ENCODE measurements at regions of chr16 and their contacts with region 1.

Region 1: DNA sequence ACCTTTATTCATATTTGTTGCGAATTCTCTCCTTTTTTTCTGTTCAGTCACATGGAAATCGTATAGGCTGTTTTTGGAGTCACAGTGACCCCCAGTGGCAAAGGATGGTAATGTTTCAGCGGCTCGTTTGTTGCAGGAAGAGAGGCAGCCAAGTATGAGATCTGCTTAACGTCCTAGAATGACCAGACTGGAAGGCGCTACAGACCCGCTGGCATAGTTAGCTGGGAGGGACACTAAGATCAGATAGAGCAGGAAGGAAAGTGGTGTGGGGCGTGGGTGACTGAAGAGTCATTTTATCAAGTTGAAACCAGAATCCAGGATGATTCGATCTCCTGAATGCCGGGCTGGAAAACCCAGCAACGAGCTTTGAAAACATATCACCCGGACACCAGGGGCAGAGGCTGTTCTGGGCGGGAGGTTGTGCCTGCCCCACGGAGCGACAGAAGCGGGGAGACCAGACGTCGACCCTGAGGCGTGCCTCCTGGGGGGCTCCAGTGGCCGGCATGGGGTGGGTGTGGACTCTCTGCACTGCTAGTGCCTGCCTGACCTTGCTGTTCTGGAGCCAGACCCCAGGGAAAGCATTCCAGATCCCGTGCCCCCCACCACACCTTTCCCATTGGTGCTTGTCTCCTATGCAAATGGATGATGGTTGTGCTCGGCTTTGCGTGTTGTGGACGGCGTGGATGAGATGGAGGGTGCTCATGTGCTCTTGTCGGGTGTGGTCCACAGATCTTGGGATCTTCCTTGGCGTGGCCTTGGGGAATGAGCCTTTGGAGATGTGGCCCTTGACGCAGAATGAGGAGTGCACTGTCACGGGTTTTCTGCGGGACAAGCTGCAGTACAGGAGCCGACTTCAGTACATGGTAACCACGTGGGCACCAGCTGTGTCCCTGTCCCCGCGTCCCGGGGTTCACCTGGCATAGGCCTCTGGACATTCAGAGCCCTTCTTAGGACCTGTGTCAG is 7.7 kb downstream of the IL34 start:
- DNase-seq: peak; percentile 79
- H3K4me3 ChIP-seq: no peak overlapping the region
- H3K27ac ChIP-seq: no peak overlapping the region
- H3K4me1 ChIP-seq: peaks cover 10% of the 10 kb centered on the region
- H3K27me3 ChIP-seq: no peaks in the 10 kb centered on the region
- CTCF ChIP-seq: peak; percentile 79 to 84

Region 2: DNA sequence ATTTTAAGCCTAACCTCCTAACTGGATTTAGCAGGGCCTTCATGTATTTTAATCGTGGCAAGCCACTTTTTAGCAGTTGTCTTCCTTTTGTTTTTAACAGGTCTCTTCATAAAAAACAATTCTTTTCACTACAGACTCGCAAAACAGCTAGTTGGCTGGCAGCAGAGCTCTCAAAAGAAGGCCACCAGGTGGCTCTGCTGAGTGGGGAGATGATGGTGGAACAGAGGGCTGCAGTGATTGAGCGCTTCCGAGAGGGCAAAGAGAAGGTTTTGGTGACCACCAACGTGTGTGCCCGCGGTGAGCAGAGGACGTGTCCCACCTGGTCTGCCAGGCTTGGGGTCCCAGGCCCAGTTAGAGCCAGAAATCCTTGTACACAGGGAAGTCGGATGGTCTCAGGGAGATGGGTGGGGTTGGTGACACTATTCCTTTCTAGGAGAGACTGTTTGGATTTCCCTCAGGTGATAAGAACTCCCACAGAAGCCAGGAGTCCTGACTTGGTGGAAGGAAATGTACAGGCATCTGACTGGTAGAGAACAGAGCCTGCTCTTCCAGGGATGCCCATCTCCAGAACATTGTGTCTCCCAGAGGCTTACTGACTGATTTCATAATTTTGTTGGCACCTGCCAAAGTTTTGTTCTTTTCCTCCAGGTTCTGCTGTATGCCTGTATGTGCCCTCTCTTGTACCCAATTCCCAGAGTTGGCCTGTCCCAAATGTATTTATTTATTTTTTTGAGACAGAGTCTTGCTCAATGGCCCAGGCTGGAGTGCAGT is 322.3 kb before region 1 on chr16:
- CTCF ChIA-PET with region 1: no interaction called
- dilution Hi-C with region 1: no loop called
- in situ Hi-C with region 1: no loop called
- intact Hi-C with region 1: loop called (anchors 1 kb)
- DNase-seq: no peak
- H3K4me3 ChIP-seq: no peak overlapping the region
- H3K27ac ChIP-seq: no peak overlapping the region
- H3K4me1 ChIP-seq: no peaks in the 10 kb centered on the region
- H3K27me3 ChIP-seq: no peaks in the 10 kb centered on the region
- CTCF ChIP-seq: peak; percentile 36 to 61

Region 3: DNA sequence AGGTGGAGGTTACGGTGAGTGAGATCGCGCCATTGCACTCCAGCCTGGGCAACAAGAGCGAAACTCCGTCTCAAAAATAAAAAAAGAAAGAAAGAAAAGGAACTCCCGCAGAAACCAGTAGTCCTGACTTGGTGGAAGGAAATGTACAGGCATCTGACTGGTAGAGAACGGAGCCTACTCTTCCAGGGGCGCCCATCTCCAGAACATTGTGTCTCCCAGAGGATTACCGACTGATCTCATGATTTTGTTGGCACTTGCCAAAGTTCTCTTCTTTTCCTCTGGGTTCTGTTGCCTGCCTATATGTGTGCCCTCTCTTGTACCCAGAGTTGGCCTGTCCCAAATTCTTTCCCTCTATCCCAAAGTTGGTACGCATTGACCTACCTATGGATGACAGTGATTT is 283.2 kb before region 1 on chr16:
- CTCF ChIA-PET with region 1: interaction called, 4 read pairs
- dilution Hi-C with region 1: no loop called
- in situ Hi-C with region 1: loop called in 1 of 2 experiments (anchors 10 kb)
- intact Hi-C with region 1: loop called (anchors 1 kb)
- DNase-seq: no peak
- H3K4me3 ChIP-seq: no peak overlapping the region
- H3K27ac ChIP-seq: no peak overlapping the region
- H3K4me1 ChIP-seq: no peaks in the 10 kb centered on the region
- H3K27me3 ChIP-seq: no peaks in the 10 kb centered on the region
- CTCF ChIP-seq: no peak

Region 4: DNA sequence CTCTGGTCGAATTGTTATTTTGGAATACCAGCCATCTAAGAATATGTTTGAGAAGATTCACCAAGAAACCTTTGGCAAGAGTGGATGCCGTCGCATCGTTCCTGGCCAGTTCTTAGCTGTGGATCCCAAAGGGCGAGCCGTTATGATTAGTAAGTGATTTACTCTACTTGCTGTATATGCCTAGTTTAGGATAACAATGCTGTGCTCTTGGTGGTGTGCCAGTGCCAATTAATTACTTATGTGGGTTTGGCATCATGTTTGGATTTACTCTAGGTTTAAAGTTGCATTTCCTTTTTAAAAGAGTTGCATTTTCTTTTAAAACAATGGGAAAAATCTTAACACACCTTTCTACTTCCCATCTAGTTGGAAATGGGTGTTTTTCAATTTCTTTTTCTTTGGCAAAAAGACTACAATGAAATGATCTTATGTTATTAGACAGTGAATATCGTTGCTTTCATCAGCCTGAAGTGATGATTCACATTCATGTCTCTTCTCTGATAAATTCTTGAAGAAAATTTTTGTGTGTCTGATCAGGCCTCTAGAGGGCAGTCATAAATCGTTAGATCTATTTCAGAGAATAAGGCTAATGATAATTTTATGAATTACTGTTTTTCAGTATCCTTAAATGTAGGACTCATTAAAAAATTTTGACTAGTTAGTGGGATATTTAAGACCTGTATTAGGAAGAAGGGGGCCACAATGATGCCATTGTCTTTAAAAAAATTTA is 124.9 kb before region 1 on chr16:
- CTCF ChIA-PET with region 1: no interaction called
- dilution Hi-C with region 1: no loop called
- in situ Hi-C with region 1: loop called in 1 of 2 experiments (anchors 5 kb)
- intact Hi-C with region 1: loop called (anchors 1 kb)
- DNase-seq: peak; percentile 55
- H3K4me3 ChIP-seq: no peak overlapping the region
- H3K27ac ChIP-seq: peak overlapping the region; percentile 18
- H3K4me1 ChIP-seq: peaks cover 32% of the 10 kb centered on the region
- H3K27me3 ChIP-seq: no peaks in the 10 kb centered on the region
- CTCF ChIP-seq: peak; percentile 54 to 59

Region 5: GRCh38 chr16:70679666-70680494 is 25.8 kb after region 1 on chr16:
- CTCF ChIA-PET with region 1: no interaction called
- dilution Hi-C with region 1: no loop called
- in situ Hi-C with region 1: no loop called
- intact Hi-C with region 1: no loop called
- DNase-seq: no peak
- H3K4me3 ChIP-seq: no peak overlapping the region
- H3K27ac ChIP-seq: no peak overlapping the region
- H3K4me1 ChIP-seq: peaks cover 46% of the 10 kb centered on the region
- H3K27me3 ChIP-seq: no peaks in the 10 kb centered on the region
- CTCF ChIP-seq: peak; percentile 23 to 41